Left cardiac atrium (tissue), 4 donors: ENCODE measurements at regions of chr3 and their contacts with region 1.

Region 1: GRCh38 chr3:24237971-24238767 is 256.5 kb downstream of the THRB start:
- DNase-seq: no peak
- ATAC-seq: peak; percentile 63 to 76

Region 2: GRCh38 chr3:23888617-23889228 is 349.4 kb before region 1 on chr3:
- intact Hi-C with region 1: loop called in 1 of 2 experiments (anchors 5 kb)
- DNase-seq: no peak
- ATAC-seq: no peak

Region 3: GRCh38 chr3:23999012-23999641 is 239.0 kb before region 1 on chr3:
- intact Hi-C with region 1: loop called (anchors 2 to 10 kb)
- DNase-seq: peak; percentile 76
- ATAC-seq: peak; percentile 33 to 41

Region 4: DNA sequence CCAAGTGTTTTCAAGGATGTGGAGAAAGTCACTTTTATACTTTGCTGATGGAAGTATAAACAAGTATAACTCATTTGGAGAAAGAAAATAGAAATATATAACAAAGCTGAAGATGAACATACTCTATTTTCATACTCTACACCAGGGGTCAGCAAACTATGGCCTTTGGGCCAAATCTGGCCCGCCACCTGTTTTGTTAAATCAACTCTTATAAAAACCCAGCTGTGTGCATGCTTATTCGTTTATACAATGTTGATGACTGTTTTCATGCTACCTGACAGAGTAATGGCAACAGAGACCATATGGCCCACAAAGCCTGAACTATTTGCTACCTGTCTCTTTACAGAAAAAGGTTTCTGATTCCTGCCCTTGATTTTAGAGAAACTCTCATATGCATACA is 169.1 kb before region 1 on chr3:
- intact Hi-C with region 1: loop called in 1 of 2 experiments (anchors 10 kb)
- DNase-seq: no peak
- ATAC-seq: peak in 1 of 2 donors; percentile 22